ENCODE measurements at regions of chr11 and their contacts with region 1.

Region 1: DNA sequence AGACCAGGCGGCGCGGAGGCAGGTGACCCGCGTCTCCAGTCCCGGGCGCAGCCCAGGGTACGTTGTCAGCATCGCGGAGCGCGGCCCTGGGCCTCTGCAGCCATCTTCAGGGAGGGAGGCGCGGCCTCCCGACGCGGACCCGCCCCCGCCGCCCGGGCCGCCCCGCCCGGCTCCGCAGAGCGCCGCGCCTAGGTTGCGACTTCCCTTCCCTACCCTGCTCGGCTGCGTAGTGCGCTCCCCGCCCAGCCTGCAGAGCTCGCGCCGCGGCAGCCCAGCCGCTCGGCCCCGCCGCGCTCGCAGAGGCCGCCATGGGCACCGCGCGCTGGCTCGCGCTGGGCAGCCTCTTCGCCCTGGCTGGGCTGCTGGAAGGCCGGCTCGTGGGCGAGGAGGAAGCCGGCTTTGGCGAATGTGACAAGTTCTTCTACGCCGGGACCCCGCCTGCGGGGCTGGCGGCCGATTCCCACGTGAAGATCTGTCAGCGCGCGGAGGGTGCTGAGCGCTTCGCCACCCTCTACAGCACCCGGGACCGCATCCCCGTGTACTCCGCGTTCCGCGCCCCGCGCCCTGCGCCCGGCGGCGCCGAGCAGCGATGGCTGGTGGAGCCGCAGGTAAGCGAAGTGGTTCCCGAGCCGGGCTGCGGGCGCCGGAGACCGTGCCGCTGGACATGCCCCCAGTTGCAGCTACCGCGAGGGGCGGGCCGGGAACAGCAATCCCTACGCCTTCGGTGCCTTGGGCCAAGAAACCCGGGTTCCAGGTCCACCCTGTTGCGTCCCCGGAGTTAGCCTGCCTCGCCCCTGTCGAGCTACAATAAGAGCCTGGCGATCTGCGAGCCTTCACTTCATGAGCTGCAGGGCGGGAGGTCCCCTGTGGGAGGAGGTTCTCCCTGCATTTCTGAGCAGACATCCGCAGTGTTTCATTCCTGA is at the start of gene ENDOD1:
- DNase-seq: peak; percentile 82
- H3K4me3 Mint-ChIP-seq: peak within 1 kb of the TSS; percentile 86
- H3K27ac Mint-ChIP-seq: peak within 1 kb of the TSS; percentile 87
- H3K4me1 Mint-ChIP-seq: peaks cover 64% of the 10 kb centered on the region
- H3K27me3 Mint-ChIP-seq: no peaks in the 10 kb centered on the region
- total RNA-seq, gene ENDOD1: 14.5 to 15.2 TPM

Region 2: DNA sequence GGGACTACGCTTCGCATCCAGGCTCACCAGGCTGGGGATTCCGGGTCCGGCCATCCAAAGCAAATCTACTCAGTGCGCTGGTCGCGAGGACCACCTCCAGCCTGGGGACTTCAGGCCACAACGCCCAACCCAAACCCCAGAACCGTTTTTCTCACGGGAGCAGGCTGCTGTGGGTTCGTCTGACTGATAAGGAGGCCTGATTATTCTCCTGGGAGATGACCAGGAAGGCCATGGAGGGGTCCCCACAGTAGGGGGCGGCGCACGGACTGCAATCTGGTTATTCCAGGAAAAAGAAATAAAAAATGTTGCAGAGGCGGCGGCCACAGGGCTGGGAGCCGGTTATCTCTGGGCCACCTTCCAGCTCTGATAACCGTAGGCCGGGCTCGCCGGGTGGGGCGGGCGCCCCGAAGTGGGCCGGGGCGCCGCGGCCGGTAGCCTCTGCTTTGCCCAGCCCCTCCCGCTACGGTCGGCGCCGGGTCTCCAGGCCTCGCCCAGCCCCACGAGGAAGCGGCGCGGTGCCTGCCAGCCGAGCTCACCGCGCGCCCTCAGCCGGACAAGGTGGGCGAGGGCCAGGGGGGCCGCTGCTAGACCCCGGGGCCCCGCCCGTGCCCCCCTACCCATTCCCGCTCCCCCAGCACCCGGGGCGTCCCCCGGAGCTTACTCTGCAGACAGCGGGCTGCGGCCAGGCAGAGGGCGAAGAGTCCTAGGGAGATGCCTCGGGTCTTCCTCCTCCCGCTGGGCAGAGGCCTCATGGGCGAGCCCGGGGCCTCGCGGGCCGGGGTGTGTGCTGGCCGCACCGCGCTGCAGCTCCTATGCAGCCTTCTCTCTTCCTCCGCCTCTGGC is 1239.9 kb before region 1 on chr11:
- CTCF ChIA-PET with region 1: no interaction called
- intact Hi-C with region 1: no loop called
- DNase-seq: no peak
- H3K4me3 Mint-ChIP-seq: peak overlapping the region; percentile 29
- H3K27ac Mint-ChIP-seq: no peak overlapping the region
- H3K4me1 Mint-ChIP-seq: peaks cover 4% of the 10 kb centered on the region
- H3K27me3 Mint-ChIP-seq: peaks cover 27% of the 10 kb centered on the region

Region 3: DNA sequence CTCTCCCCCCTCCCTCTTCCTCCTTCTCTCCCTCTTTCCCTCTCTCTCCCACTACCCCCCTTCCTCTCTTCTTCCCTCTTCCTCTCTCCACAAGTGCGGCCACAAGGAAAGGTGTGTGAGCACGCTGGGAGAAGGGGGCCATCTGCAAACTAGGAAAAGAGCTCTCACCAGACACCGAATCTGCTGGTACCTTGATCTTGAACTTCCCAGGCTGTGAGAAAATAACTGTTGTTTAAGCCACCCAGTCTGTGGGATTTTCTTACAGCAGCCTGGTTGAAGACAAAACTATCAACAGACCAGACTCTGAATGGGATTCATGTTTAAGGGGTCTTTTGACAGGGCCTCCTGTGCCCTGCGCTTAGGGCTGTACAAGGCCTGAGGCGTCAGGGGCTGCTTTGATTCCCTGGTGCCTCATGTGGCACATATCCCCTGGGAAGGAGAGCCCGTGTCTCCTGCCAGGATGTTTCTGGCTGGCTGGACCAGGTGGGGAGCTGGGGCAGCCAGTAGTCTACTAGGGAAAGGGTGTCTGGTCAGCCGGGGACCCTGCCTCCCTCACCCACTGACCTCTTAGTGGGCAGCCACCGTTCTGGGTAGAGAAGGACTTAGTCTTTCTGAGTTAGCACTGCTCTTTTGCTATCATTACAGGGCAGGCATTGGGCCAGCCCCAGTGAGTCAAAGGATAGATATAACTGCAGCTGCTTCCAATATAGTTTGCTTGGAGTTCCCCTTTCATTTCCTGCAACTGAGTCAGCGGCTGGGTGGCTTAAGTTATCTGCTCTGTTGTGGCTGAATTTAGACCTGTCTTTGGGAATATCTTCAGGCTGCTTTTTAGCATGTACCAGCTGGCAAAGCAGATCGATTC is 955.0 kb before region 1 on chr11:
- CTCF ChIA-PET with region 1: no interaction called
- intact Hi-C with region 1: loop called (anchors 10 kb)
- DNase-seq: peak; percentile 78
- H3K4me3 Mint-ChIP-seq: no peak overlapping the region
- H3K27ac Mint-ChIP-seq: peak overlapping the region; percentile 22
- H3K4me1 Mint-ChIP-seq: peaks cover 40% of the 10 kb centered on the region
- H3K27me3 Mint-ChIP-seq: no peaks in the 10 kb centered on the region

Region 4: DNA sequence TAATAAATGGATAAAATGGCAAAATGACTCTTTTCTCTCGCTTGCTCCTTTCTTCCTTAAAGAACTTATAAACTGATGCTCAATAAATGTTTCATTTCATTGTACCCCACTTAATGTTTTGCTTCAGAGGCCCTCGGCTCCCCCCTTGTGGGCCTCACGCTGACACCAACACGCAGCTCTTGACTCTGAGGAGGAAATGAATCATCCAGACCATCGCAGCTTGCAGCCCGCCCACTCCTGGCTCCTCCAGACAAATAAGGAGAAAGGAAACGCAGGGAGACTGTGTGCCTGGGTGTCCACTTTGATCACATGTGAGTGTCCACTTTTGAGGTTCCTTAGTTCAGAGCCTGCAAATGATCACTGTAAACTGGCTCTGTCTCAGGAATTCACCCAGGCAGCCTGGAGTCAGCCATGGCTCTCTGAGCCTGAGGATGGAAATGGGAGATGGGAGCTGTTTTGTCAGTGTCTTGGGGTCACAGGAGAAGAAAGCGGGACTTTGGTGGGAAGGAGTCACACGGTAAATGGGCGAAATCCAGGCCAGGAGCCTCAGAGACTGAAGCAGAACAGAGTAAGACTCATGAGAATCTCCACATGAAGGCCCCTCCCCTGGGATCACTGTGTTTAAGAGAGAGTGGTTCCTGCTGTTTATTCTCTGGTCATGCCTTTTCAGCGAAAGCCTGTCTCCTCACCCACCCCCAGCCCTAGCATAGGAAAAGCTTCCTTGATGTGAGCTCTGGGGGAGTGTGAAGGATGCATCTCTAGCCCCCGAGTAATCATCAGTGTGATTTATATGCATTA is 213.0 kb before region 1 on chr11:
- CTCF ChIA-PET with region 1: no interaction called
- intact Hi-C with region 1: loop called (anchors 5 kb)
- DNase-seq: peak; percentile 86
- H3K4me3 Mint-ChIP-seq: no peak overlapping the region
- H3K27ac Mint-ChIP-seq: peak overlapping the region; percentile 59
- H3K4me1 Mint-ChIP-seq: peaks cover 23% of the 10 kb centered on the region
- H3K27me3 Mint-ChIP-seq: no peaks in the 10 kb centered on the region

Region 5: GRCh38 chr11:95102733-95103132 is 12.9 kb after region 1 on chr11:
- CTCF ChIA-PET with region 1: interaction called, 12 read pairs
- intact Hi-C with region 1: no loop called
- DNase-seq: no peak
- H3K4me3 Mint-ChIP-seq: no peak overlapping the region
- H3K27ac Mint-ChIP-seq: no peak overlapping the region
- H3K4me1 Mint-ChIP-seq: peaks cover 7% of the 10 kb centered on the region
- H3K27me3 Mint-ChIP-seq: no peaks in the 10 kb centered on the region

Region 6: GRCh38 chr11:95138448-95138847 is 48.6 kb after region 1 on chr11:
- CTCF ChIA-PET with region 1: interaction called, 10 read pairs
- intact Hi-C with region 1: no loop called
- DNase-seq: no peak
- H3K4me3 Mint-ChIP-seq: no peak overlapping the region
- H3K27ac Mint-ChIP-seq: no peak overlapping the region
- H3K4me1 Mint-ChIP-seq: peaks cover 7% of the 10 kb centered on the region
- H3K27me3 Mint-ChIP-seq: peaks cover 9% of the 10 kb centered on the region